Vagina (tissue), 2 donors: ENCODE measurements at regions of chr4 and their contacts with region 1.

Region 1: GRCh38 chr4:95701500-95702170 is 138.3 kb upstream of the PDHA2 start:
- DNase-seq: no peak
- H3K4me3 ChIP-seq: no peak overlapping the region
- H3K27ac ChIP-seq: peak overlapping the region; percentile 21
- H3K4me1 ChIP-seq: no peaks in the 10 kb centered on the region
- H3K27me3 ChIP-seq: no peaks in the 10 kb centered on the region
- CTCF ChIP-seq: no peak
- POLR2A ChIP-seq: no peak

Region 2: GRCh38 chr4:95556207-95556859 is 145.3 kb before region 1 on chr4:
- intact Hi-C with region 1: no loop called
- DNase-seq: no peak
- H3K4me3 ChIP-seq: no peak overlapping the region
- H3K27ac ChIP-seq: no peak overlapping the region
- H3K4me1 ChIP-seq: no peaks in the 10 kb centered on the region
- H3K27me3 ChIP-seq: no peaks in the 10 kb centered on the region
- CTCF ChIP-seq: no peak
- POLR2A ChIP-seq: no peak

Region 3: DNA sequence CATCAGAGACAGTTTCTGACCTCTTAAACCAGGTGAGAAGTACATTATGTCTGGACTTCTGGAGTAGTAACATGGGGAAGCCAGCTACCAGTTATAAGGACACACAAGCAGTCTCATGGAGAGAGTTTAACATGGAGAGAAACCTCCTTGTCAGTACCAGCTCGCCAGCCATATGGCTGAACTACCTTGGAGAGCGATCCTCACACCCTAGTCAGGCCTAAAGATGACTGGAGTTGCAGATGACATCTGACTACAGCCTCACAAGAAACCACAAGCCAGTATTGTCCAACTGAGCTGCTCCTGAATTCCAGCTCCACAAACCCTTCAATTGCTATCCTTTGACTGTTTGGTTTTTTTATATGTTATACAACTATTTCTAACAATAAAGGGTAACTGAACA is 188.0 kb after region 1 on chr4:
- intact Hi-C with region 1: no loop called
- DNase-seq: no peak
- H3K4me3 ChIP-seq: no peak overlapping the region
- H3K27ac ChIP-seq: no peak overlapping the region
- H3K4me1 ChIP-seq: no peaks in the 10 kb centered on the region
- H3K27me3 ChIP-seq: no peaks in the 10 kb centered on the region
- CTCF ChIP-seq: no peak
- POLR2A ChIP-seq: no peak

Region 4: GRCh38 chr4:96681218-96681617 is 979.6 kb after region 1 on chr4:
- intact Hi-C with region 1: loop called (anchors 5 kb)
- DNase-seq: no peak
- H3K4me3 ChIP-seq: no peak overlapping the region
- H3K27ac ChIP-seq: no peak overlapping the region
- H3K4me1 ChIP-seq: no peaks in the 10 kb centered on the region
- H3K27me3 ChIP-seq: no peaks in the 10 kb centered on the region
- CTCF ChIP-seq: no peak
- POLR2A ChIP-seq: no peak